Activated CD4-positive, alpha-beta memory T cell treated with anti-CD3 and anti-CD28 coated beads for 36 hours (primary cell): ENCODE measurements at regions of chr13 and their contacts with region 1.

Region 1: DNA sequence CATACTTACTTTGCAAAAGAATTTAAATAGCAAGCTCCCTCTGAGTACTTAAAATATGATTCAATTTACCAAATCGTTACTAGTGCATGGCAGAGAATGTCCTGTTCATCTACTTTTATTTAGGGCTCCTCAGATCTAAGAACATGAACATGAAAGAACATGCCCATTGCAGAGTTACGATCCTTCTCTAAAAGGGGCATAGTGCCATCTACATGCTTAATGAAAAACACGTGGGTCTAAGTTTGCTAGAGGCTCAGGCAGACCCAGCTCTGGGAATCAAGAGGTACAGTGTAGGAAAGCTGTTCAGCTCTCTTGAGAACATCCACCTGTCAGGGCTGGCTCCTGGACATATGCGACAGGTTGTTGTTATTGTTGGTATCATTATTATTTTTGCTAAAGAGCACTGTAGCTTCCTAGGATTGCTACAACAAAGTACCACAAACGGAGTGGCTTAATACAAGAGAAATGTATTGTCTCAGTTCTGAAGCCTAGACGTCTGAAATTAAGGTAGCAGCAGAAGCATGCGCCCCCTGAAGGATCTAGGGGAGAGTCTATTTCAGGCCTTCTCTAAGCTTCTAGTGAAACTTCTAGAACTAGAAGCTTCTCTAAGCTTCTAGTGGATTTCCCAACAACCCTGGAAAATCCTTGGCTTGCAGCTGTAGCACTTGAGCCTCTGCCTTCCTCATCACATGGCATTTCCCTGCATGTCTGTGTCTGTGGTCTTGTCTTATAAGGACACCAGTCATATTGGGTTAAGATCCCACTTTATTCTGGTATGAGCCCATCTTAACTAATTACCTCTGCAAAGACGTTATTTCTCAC is 133.9 kb downstream of the DCT start:
- DNase-seq: no peak
- H3K4me3 Mint-ChIP-seq: no peak overlapping the region
- H3K27ac Mint-ChIP-seq: no peak overlapping the region
- H3K4me1 Mint-ChIP-seq: peaks cover 17% of the 10 kb centered on the region
- H3K27me3 Mint-ChIP-seq: peaks cover 2% of the 10 kb centered on the region

Region 2: DNA sequence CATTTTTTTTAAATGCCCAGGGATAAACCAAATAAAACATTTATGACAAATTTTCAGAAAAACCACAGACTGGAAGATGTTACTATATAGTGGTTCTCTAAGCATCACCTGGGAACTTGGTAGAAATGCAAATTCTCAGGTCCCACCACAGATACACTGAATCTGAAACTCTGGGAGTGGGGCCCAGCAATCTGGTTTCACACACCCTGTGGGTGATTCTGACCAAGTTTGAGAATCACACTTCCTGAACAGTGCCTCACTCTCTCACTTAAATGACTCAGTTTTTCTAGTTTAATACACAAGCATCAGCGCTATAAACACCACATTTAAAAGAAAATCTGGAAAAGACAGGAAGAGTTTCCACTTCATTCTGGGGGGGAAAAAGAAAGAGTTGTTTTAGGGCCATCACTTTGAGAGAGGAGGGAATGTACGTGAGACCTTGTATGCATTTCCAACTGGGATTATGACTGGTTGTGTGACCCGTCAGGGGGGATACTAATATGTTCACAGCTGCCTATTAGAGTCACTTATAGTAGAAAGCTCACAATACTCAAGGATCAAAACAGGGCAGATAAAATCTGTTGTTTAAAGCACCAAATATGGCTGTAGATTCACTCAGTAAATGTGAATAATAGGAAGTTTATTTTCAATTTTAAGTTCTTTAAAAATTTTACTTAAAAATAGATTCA is 551.2 kb before region 1 on chr13:
- CTCF ChIA-PET with region 1: no interaction called
- POLR2A ChIA-PET with region 1: no interaction called
- intact Hi-C with region 1: loop called (anchors 1 kb)
- DNase-seq: peak; percentile 80
- H3K4me3 Mint-ChIP-seq: no peak overlapping the region
- H3K27ac Mint-ChIP-seq: no peak overlapping the region
- H3K4me1 Mint-ChIP-seq: peaks cover 7% of the 10 kb centered on the region
- H3K27me3 Mint-ChIP-seq: peaks cover 16% of the 10 kb centered on the region